Mammary epithelial cell (primary cell): ENCODE measurements at regions of chr16 and their contacts with region 1.

Region 1: DNA sequence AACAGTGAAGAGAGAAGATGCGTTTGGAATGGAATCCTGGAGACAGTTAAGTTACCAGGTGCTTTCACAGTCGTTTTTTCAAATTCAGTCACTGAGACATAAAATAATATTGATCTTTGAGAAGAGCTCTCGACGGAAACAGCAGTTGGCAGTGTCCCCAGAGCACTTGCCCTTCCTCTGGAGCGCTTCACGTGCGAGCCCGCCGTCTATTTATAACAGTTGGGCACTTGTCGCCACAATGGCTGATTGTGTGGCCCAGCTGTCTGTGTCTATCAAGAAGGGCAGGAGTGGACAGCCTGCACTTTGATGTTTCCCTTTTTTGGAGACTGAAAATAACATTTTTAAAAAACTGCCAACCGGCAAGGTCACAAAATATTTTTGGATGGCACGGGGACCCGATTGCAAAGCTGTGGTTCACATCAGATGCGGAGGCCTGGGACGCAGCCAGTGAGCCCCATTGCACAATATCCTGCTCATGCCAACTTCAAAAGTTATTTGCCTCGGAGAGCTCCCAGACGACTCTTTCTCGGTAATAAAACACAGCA is 62.9 kb downstream of the ADCY9 start:
- DNase-seq: peak; percentile 50
- H3K4me3 ChIP-seq: peak overlapping the region in 1 of 3 experiments; percentile 2
- H3K27ac ChIP-seq: peak overlapping the region; percentile 56
- H3K4me1 ChIP-seq: peaks cover 31% of the 10 kb centered on the region
- H3K27me3 ChIP-seq: no peaks in the 10 kb centered on the region
- CTCF ChIP-seq: no peak

Region 2: GRCh38 chr16:4021073-4021779 is 32.1 kb before region 1 on chr16:
- CTCF ChIA-PET with region 1: no interaction called
- dilution Hi-C with region 1: no loop called
- in situ Hi-C with region 1: no loop called
- intact Hi-C with region 1: loop called (anchors 1 kb)
- DNase-seq: peak; percentile 86
- H3K4me3 ChIP-seq: no peak overlapping the region
- H3K27ac ChIP-seq: no peak overlapping the region
- H3K4me1 ChIP-seq: peaks cover 7% of the 10 kb centered on the region
- H3K27me3 ChIP-seq: no peaks in the 10 kb centered on the region
- CTCF ChIP-seq: no peak

Region 3: DNA sequence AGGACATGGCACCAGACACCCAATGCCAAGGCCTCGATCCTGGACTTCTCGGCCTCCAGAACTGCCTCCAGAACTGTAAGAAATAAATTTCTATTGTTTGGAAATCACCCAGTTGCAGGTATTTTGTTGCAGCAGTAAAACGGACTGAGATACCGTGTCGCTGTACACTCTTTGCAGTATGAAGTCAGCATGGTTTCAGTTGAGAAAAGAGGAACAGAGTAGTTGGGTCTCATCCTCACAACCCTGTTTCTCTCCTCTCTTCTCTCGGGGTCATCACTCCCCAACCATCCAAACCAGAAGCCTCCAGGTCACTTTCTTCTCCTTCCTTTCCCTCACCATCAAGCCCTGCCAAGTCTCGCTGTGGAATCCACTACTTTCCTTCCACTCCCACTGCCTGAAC is 14.9 kb before region 1 on chr16:
- CTCF ChIA-PET with region 1: no interaction called
- dilution Hi-C with region 1: no loop called
- in situ Hi-C with region 1: no loop called
- intact Hi-C with region 1: no loop called
- DNase-seq: no peak
- H3K4me3 ChIP-seq: no peak overlapping the region
- H3K27ac ChIP-seq: no peak overlapping the region
- H3K4me1 ChIP-seq: no peaks in the 10 kb centered on the region
- H3K27me3 ChIP-seq: no peaks in the 10 kb centered on the region
- CTCF ChIP-seq: no peak

Region 4: GRCh38 chr16:4097811-4098240 is 44.5 kb after region 1 on chr16:
- CTCF ChIA-PET with region 1: no interaction called
- dilution Hi-C with region 1: no loop called
- in situ Hi-C with region 1: no loop called
- intact Hi-C with region 1: loop called (anchors 5 kb)
- DNase-seq: no peak
- H3K4me3 ChIP-seq: no peak overlapping the region
- H3K27ac ChIP-seq: no peak overlapping the region
- H3K4me1 ChIP-seq: no peaks in the 10 kb centered on the region
- H3K27me3 ChIP-seq: no peaks in the 10 kb centered on the region
- CTCF ChIP-seq: no peak

Region 5: GRCh38 chr16:4183237-4184036 is 130.1 kb after region 1 on chr16:
- CTCF ChIA-PET with region 1: no interaction called
- dilution Hi-C with region 1: no loop called
- in situ Hi-C with region 1: no loop called
- intact Hi-C with region 1: loop called (anchors 5 kb)
- DNase-seq: peak; percentile 92
- H3K4me3 ChIP-seq: peak overlapping the region; percentile 72 to 78 (median 73)
- H3K27ac ChIP-seq: peak overlapping the region; percentile 84
- H3K4me1 ChIP-seq: peaks cover 13% of the 10 kb centered on the region
- H3K27me3 ChIP-seq: no peaks in the 10 kb centered on the region
- CTCF ChIP-seq: no peak